Endothelial cell of umbilical vein (primary cell): ENCODE measurements at regions of chr1 and their contacts with region 1.

Region 1: DNA sequence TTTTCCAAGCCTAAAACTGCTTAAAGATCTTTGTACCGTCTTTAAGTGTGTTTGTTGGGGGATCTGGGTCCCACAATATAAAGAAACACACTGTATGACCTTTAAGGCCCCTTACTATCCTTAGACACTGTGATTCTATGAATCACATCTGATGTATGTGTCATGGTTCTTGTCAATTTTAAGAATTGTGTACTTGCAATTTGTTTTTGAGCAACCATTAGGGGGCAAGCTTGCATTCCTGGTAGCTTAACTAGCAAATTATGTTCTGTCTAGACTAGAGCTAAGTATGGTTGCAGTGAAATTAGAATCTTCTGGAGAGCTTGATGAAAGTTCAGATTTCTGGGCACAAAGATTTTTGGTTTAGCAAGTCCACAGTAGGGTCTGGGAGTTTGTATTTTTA is 219.5 kb downstream of the TPR start:
- DNase-seq: peak; percentile 60
- H3K4me3 ChIP-seq: no peak overlapping the region
- H3K27ac ChIP-seq: no peak overlapping the region
- H3K4me1 ChIP-seq: no peaks in the 10 kb centered on the region
- H3K27me3 ChIP-seq: no peaks in the 10 kb centered on the region
- CTCF ChIP-seq: peak; percentile 41 to 45
- POLR2A ChIP-seq: no peak

Region 2: GRCh38 chr1:185934476-185935189 is 221.0 kb before region 1 on chr1:
- CTCF ChIA-PET with region 1: no interaction called
- POLR2A ChIA-PET with region 1: no interaction called
- dilution Hi-C with region 1: no loop called
- intact Hi-C with region 1: no loop called
- DNase-seq: no peak
- H3K4me3 ChIP-seq: no peak overlapping the region
- H3K27ac ChIP-seq: no peak overlapping the region
- H3K4me1 ChIP-seq: no peaks in the 10 kb centered on the region
- H3K27me3 ChIP-seq: no peaks in the 10 kb centered on the region
- CTCF ChIP-seq: no peak
- POLR2A ChIP-seq: no peak

Region 3: GRCh38 chr1:186175588-186175987 is 20.0 kb after region 1 on chr1:
- CTCF ChIA-PET with region 1: interaction called, 10 read pairs
- POLR2A ChIA-PET with region 1: no interaction called
- dilution Hi-C with region 1: no loop called
- intact Hi-C with region 1: no loop called
- DNase-seq: no peak
- H3K4me3 ChIP-seq: no peak overlapping the region
- H3K27ac ChIP-seq: no peak overlapping the region
- H3K4me1 ChIP-seq: no peaks in the 10 kb centered on the region
- H3K27me3 ChIP-seq: no peaks in the 10 kb centered on the region
- CTCF ChIP-seq: no peak
- POLR2A ChIP-seq: no peak